ENCODE measurements at regions of chr1 and their contacts with region 1.

Region 1: GRCh38 chr1:207811920-207812720 is 60.3 kb downstream of the CD46 start:
- DNase-seq: peak in 1 of 2 experiments; percentile 57
- H3K4me3 ChIP-seq: no peak overlapping the region
- H3K27ac ChIP-seq: no peak overlapping the region
- H3K4me1 ChIP-seq: no peaks in the 10 kb centered on the region; a peak in 1 of 7 replicates
- H3K27me3 ChIP-seq: no peaks in the 10 kb centered on the region
- CTCF ChIP-seq: peak; percentile 55 to 83 (median 78)
- EP300 ChIP-seq: no peak
- POLR2A ChIP-seq: no peak
- RAD21 ChIP-seq: peak; percentile 43 to 57

Region 2: DNA sequence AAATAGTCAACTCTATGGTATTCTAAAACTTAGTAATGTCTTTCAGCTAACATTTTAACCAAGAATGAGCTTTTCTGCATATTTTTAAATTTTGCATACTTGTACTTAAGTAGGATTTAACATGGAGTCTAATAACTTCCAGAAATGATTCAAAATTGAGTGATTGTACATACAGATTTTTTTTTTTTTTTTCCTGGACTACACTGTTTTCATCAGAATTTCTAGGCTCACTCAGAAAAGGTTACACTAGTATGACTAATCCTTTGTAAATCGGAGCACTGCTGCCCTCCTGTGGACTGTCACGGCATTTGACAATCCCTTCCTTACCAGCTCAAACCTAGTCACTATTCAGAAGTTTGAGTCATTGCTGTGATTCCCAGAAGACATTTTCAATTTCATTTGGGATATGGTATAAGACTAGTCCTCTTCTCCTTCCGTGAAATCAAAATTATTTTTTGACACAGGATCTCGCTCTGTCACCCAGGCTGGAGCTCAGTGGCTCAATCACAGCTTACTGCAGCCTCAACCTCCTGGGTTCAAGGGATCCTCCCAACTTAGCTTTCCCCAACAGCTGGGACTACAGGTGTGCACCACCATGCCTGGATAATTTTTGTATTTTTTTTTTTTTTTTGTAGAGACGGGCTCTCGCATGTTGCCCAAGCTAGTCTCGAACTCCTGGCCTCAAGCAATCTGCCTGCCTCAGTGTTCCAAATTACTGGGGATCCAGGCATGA is 14.7 kb before region 1 on chr1:
- CTCF ChIA-PET with region 1: interaction called, 21 read pairs
- POLR2A ChIA-PET with region 1: interaction called, 6 read pairs
- DNase-seq: peak; percentile 31 to 78
- H3K4me3 ChIP-seq: no peak overlapping the region
- H3K27ac ChIP-seq: no peak overlapping the region
- H3K4me1 ChIP-seq: peaks cover 0 to 2% (median 0%) of the 10 kb centered on the region in 4 experiments; a peak in 1 of 7 replicates
- H3K27me3 ChIP-seq: no peaks in the 10 kb centered on the region
- CTCF ChIP-seq: peak; percentile 41 to 83 (median 72)
- EP300 ChIP-seq: no peak
- POLR2A ChIP-seq: no peak
- RAD21 ChIP-seq: peak; percentile 69 to 72

Region 3: GRCh38 chr1:207828485-207829158 is 16.5 kb after region 1 on chr1:
- CTCF ChIA-PET with region 1: interaction called, 54 read pairs
- POLR2A ChIA-PET with region 1: no interaction called
- DNase-seq: peak; percentile 63 to 66
- H3K4me3 ChIP-seq: no peak overlapping the region
- H3K27ac ChIP-seq: no peak overlapping the region
- H3K4me1 ChIP-seq: no peaks in the 10 kb centered on the region; a peak in 1 of 7 replicates
- H3K27me3 ChIP-seq: no peaks in the 10 kb centered on the region
- CTCF ChIP-seq: peak; percentile 74 to 94 (median 91)
- EP300 ChIP-seq: no peak
- POLR2A ChIP-seq: no peak
- RAD21 ChIP-seq: peak; percentile 88 to 92

Region 4: DNA sequence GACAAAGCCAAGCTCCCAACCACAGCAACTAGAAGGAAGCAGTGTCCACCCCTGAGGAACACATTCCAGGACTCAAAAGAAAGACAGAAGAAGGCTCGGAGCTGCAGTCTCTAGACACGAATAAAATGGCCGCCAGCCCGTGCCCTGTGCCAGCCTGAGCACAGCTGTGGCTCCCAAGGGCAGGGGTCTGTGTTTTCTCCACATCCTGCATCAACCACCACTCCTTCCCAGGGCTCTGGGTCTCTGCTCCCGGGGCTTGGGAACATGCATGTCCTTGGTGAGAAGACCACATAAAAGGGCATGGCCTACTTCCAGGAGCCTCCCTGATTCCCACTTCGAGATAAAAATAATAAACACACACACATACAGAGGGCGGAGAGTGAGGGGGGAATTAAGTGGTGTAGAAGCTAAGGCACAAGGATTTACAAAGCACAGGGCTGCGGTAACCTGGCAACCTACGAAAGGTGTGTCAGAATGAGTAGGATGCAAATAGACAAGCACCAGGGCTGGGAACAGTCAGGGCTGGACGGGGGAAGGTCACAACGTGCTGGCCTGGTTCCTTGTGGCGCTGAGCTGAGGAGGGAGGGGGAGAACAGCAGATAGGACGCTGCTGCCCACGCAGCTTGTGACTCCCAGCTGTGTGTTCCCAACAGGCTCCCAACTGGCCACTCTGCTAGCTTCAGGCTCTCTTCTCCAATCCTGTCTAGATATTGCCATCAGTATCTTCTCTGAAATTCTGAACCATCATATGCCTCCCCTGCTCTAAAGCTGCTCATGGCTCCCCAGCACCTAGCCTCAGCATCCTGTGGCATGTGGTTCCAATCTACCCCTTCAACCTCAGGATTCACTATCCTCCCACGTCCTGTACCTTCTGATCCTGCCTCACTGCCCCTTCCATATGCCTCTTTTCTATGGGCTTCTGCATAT is 26.3 kb after region 1 on chr1:
- CTCF ChIA-PET with region 1: interaction called, 12 read pairs
- POLR2A ChIA-PET with region 1: no interaction called
- DNase-seq: no peak
- H3K4me3 ChIP-seq: no peak overlapping the region
- H3K27ac ChIP-seq: no peak overlapping the region
- H3K4me1 ChIP-seq: peaks cover 0 to 3% (median 1%) of the 10 kb centered on the region in 4 experiments; a peak in 3 of 7 replicates
- H3K27me3 ChIP-seq: no peaks in the 10 kb centered on the region
- CTCF ChIP-seq: no peak
- EP300 ChIP-seq: no peak
- POLR2A ChIP-seq: no peak
- RAD21 ChIP-seq: no peak

Region 5: DNA sequence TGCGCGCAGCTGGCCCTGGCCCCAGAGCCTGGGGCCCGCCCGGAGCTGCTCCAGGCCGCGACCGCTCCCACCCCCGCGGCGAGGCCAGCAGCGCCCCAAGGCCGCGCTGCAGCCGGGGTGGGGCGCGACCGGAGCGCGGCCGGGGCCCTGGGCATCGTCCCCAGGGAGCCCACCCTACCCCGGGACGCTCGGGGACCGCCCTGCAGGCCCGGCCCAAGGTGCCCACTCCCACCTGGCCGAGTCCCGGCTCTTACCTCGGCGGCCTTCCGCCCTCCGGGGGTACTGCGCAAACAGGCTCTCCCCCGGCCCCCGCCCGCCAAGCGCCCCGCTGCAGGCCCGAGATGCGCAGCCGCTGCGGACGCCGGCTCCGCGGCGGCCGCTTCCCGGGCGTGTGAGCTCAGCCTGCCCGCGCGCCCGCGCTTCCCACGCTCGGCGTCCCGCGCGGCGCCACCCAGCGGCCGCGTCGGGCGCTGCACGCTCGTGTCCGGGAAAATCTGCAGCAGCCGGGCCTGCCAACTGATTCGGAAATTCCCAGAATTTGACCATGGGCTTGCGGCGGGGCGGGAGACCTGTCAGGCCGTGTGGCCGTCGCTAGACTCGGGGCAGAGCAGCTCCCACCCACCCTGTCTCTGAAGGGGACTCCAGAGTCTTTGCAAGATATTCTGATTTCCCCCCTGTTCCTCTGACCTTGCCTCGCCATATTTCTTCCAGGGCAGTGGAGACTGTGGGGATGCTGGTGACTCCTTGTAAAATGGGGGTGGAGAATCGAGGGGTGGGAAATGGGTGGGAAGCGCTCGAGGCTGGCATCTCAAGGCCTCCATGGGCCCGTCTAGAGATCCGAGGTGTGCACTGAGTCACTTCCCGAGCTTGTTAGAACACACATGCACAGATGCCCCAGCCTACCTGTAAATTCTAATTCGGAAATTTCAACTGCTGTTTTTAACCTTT is 56.9 kb after region 1 on chr1:
- CTCF ChIA-PET with region 1: interaction called, 31 read pairs
- POLR2A ChIA-PET with region 1: no interaction called
- DNase-seq: peak; percentile 29 to 90
- H3K4me3 ChIP-seq: peak overlapping the region; percentile 34 to 68 (median 50)
- H3K27ac ChIP-seq: no peak overlapping the region
- H3K4me1 ChIP-seq: peaks cover 0 to 8% (median 5%) of the 10 kb centered on the region in 4 experiments; a peak in 6 of 7 replicates
- H3K27me3 ChIP-seq: peaks cover 0 to 23% (median 8%) of the 10 kb centered on the region in 4 experiments; a peak in 6 of 7 replicates
- CTCF ChIP-seq: peak; percentile 69 to 82 (median 72)
- EP300 ChIP-seq: peak in 1 of 2 experiments; percentile 81; a peak in 1 of 3 replicates
- POLR2A ChIP-seq: no peak
- RAD21 ChIP-seq: peak; percentile 25 to 61

Region 6: GRCh38 chr1:207876131-207876530 is 64.0 kb after region 1 on chr1:
- CTCF ChIA-PET with region 1: interaction called, 31 read pairs
- POLR2A ChIA-PET with region 1: no interaction called
- DNase-seq: no peak
- H3K4me3 ChIP-seq: no peak overlapping the region
- H3K27ac ChIP-seq: no peak overlapping the region
- H3K4me1 ChIP-seq: 0 out of 7 replicates have a peak, but pooled peaks cover 0 to 2% (median 0%) of the 10 kb centered on the region in 4 experiments
- H3K27me3 ChIP-seq: no peaks in the 10 kb centered on the region
- CTCF ChIP-seq: peak; percentile 50 to 66 (median 51)
- EP300 ChIP-seq: no peak
- POLR2A ChIP-seq: no peak
- RAD21 ChIP-seq: peak; percentile 21 to 50; a peak in 3 of 4 replicates

Region 7: DNA sequence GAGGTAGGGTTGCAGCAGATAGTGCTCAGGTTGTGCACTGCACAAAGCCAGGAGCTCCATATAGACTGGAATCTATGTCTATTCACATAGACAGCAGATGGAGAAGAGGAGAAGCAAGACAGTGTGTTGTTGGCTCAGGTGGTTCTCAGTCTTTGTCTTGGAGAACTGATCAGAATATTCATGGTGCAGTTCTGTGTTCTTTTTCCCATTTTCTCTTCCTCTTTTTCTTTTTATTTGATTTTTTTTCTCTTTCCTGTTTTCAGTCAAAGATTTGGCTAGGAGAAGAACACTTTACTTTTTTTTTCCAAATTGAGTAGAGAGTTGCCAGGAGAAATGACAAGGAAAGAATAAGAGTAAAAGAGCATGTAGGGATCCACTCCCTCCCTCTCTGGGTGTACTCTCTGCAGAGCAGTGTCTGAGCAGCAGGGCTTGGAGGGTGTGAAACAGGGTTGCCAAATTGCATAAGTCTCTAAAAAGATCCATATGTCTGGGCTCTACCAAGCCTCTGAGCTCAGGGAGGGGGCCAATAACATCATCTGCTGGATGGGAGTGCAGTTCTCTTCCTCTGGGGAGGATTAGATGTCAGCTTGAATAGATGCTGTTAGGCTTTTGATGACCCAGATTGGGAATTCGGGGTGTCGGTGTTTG is 107.5 kb after region 1 on chr1:
- CTCF ChIA-PET with region 1: no interaction called
- POLR2A ChIA-PET with region 1: no interaction called
- DNase-seq: no peak
- H3K4me3 ChIP-seq: no peak overlapping the region
- H3K27ac ChIP-seq: no peak overlapping the region
- H3K4me1 ChIP-seq: no peaks in the 10 kb centered on the region; a peak in 2 of 7 replicates
- H3K27me3 ChIP-seq: no peaks in the 10 kb centered on the region
- CTCF ChIP-seq: no peak
- EP300 ChIP-seq: no peak
- POLR2A ChIP-seq: no peak
- RAD21 ChIP-seq: no peak

Region 8: GRCh38 chr1:207933205-207933800 is 121.2 kb after region 1 on chr1:
- CTCF ChIA-PET with region 1: no interaction called
- POLR2A ChIA-PET with region 1: no interaction called
- DNase-seq: no peak
- H3K4me3 ChIP-seq: no peak overlapping the region
- H3K27ac ChIP-seq: no peak overlapping the region
- H3K4me1 ChIP-seq: no peaks in the 10 kb centered on the region
- H3K27me3 ChIP-seq: no peaks in the 10 kb centered on the region; a peak in 1 of 7 replicates
- CTCF ChIP-seq: no peak
- EP300 ChIP-seq: no peak
- POLR2A ChIP-seq: no peak
- RAD21 ChIP-seq: no peak

Region 9: DNA sequence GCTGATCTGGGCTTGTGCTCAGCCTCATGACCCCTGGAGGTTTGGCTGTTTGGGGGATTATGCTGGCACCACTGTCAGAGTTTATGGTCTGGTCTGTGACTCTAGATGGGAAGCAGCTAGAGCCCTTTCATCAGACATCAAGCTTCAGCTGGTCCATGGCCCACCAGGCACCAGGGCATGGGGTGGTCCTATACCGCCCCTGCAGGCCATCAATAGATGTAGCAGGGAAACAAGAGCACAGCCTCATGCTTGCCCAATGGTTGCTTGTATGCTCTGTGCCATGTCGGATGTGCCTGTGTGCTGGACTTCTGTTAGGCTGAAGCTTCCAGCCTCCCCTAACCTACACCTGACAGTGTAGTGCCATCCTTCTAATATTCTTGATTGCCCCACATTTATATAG is 169.9 kb after region 1 on chr1:
- CTCF ChIA-PET with region 1: interaction called, 10 read pairs
- POLR2A ChIA-PET with region 1: no interaction called
- DNase-seq: peak in 1 of 2 experiments; percentile 52
- H3K4me3 ChIP-seq: no peak overlapping the region
- H3K27ac ChIP-seq: no peak overlapping the region
- H3K4me1 ChIP-seq: no peaks in the 10 kb centered on the region
- H3K27me3 ChIP-seq: no peaks in the 10 kb centered on the region
- CTCF ChIP-seq: peak; percentile 80 to 94 (median 93)
- EP300 ChIP-seq: no peak
- POLR2A ChIP-seq: no peak
- RAD21 ChIP-seq: peak; percentile 76 to 82

Measured in H1 (cell line).